ENCODE measurements at regions of chr17 and their contacts with region 1.

Region 1: GRCh38 chr17:49707608-49708514 is at the start of gene SLC35B1:
- DNase-seq: peak; percentile 99
- H3K4me3 Mint-ChIP-seq: peak within 1 kb of the TSS; percentile 83
- H3K27ac Mint-ChIP-seq: peak within 1 kb of the TSS; percentile 100
- H3K4me1 Mint-ChIP-seq: peaks cover 23% of the 10 kb centered on the region
- H3K27me3 Mint-ChIP-seq: no peaks in the 10 kb centered on the region
- CTCF ChIP-seq: peak; percentile 62
- total RNA-seq, gene SLC35B1: 99.6 and 130 TPM in 2 replicates

Region 2: GRCh38 chr17:49567871-49568694 is 139.8 kb before region 1 on chr17:
- CTCF ChIA-PET with region 1: interaction called, 325 read pairs
- POLR2A ChIA-PET with region 1: interaction called, 16 read pairs
- intact Hi-C with region 1: no loop called
- DNase-seq: peak; percentile 79
- H3K4me3 Mint-ChIP-seq: peak overlapping the region; percentile 56
- H3K27ac Mint-ChIP-seq: no peak overlapping the region
- H3K4me1 Mint-ChIP-seq: peaks cover 20% of the 10 kb centered on the region
- H3K27me3 Mint-ChIP-seq: peaks cover 24% of the 10 kb centered on the region
- CTCF ChIP-seq: peak; percentile 95

Region 3: GRCh38 chr17:49646391-49647255 is 61.2 kb before region 1 on chr17:
- CTCF ChIA-PET with region 1: interaction called, 6 read pairs
- POLR2A ChIA-PET with region 1: interaction called, 13 read pairs
- intact Hi-C with region 1: no loop called
- DNase-seq: peak; percentile 76
- H3K4me3 Mint-ChIP-seq: peak overlapping the region; percentile 79
- H3K27ac Mint-ChIP-seq: peak overlapping the region; percentile 84
- H3K4me1 Mint-ChIP-seq: peaks cover 23% of the 10 kb centered on the region
- H3K27me3 Mint-ChIP-seq: no peaks in the 10 kb centered on the region
- CTCF ChIP-seq: no peak

Region 4: DNA sequence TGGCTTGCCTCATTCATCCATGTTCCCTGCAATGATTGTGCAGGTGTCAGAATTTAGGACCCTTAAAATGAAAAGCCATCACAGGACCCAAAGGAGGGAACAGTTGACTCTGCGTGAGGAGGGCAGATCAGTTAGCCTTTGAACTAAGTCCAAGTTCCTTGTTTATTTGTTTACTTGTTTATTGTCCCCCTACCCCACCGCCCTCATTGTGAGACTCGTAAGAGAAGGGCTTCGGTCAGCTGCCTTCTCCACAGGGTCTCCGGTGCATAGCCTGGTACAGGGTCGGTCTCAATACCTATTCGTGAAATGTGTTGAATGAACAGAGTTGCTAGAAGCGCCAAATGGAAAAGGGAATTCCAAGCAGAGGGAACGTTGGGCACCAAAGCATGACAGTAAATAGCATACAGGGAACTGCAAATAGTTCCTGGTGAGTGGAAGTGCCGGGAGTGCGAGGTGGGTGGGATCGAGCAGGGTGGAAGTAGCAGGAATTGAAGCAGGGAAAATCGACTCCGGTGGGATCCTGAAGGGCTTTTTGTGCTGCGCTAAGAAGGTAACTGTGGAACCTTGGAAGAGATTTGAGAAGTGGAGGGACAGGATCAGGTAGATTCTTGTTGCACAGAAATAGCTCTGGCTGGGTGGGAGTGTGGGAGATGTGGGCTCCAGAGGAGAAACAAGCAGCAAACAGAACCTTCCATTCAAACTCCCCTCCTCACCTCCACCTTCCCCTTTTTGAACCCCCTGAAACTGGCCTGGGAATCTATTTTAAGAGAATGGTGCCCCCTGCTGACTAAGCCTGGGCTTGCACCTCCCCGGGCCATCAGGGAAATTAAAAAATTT is 12.8 kb before region 1 on chr17:
- CTCF ChIA-PET with region 1: interaction called, 47 read pairs
- POLR2A ChIA-PET with region 1: interaction called, 12 read pairs
- intact Hi-C with region 1: no loop called
- DNase-seq: peak; percentile 30
- H3K4me3 Mint-ChIP-seq: no peak overlapping the region
- H3K27ac Mint-ChIP-seq: no peak overlapping the region
- H3K4me1 Mint-ChIP-seq: no peaks in the 10 kb centered on the region
- H3K27me3 Mint-ChIP-seq: no peaks in the 10 kb centered on the region
- CTCF ChIP-seq: peak; percentile 92

Region 5: DNA sequence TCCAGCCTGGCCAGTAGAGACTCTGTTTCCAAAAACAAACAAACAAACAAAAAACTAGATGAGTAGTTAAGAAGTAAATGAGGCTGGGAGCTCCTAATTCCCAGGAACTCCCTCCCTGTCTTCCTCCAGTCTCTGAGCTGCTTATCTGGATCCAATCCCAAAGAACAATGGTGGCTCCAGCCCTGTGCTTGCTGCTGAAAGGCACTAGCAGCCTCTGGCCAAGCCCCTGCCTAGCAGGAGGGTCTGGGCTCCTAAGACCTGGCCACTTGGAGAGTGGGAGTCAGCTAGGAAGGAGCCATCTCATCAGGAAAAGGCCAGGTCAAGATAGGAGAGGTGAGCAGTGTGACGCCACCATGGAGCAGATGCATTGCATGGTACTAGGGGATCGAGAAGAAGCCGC is 14.2 kb after region 1 on chr17:
- CTCF ChIA-PET with region 1: interaction called, 8 read pairs
- POLR2A ChIA-PET with region 1: interaction called, 23 read pairs
- intact Hi-C with region 1: no loop called
- DNase-seq: no peak
- H3K4me3 Mint-ChIP-seq: no peak overlapping the region
- H3K27ac Mint-ChIP-seq: no peak overlapping the region
- H3K4me1 Mint-ChIP-seq: no peaks in the 10 kb centered on the region
- H3K27me3 Mint-ChIP-seq: no peaks in the 10 kb centered on the region
- CTCF ChIP-seq: no peak

Region 6: DNA sequence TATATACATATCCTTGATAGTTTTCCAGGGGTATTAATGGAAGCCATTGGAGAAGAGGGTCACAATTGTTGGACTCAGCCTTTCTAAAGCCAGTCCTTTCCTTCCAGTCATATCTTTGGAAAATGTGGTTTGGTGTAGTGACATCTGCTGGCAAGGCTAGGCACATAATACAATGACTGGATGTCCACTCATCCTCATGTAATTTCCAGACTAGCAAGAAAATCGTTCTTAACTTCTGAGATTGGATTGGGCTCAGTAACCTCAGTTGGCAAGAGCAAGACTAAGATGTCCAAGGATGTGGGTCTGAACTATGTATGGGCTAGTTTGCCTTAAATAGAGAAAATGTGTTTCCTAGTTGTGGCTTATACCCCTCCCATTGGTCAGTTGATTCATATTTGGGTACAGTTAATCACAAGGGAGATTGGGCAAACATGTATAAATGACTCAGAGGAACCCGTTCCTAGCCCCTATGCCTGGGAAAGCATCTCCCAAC is 71.9 kb after region 1 on chr17:
- CTCF ChIA-PET with region 1: interaction called, 14 read pairs
- POLR2A ChIA-PET with region 1: interaction called, 6 read pairs
- intact Hi-C with region 1: loop called (anchors 1 kb)
- DNase-seq: peak; percentile 58
- H3K4me3 Mint-ChIP-seq: no peak overlapping the region
- H3K27ac Mint-ChIP-seq: no peak overlapping the region
- H3K4me1 Mint-ChIP-seq: no peaks in the 10 kb centered on the region
- H3K27me3 Mint-ChIP-seq: no peaks in the 10 kb centered on the region
- CTCF ChIP-seq: peak; percentile 56

Region 7: DNA sequence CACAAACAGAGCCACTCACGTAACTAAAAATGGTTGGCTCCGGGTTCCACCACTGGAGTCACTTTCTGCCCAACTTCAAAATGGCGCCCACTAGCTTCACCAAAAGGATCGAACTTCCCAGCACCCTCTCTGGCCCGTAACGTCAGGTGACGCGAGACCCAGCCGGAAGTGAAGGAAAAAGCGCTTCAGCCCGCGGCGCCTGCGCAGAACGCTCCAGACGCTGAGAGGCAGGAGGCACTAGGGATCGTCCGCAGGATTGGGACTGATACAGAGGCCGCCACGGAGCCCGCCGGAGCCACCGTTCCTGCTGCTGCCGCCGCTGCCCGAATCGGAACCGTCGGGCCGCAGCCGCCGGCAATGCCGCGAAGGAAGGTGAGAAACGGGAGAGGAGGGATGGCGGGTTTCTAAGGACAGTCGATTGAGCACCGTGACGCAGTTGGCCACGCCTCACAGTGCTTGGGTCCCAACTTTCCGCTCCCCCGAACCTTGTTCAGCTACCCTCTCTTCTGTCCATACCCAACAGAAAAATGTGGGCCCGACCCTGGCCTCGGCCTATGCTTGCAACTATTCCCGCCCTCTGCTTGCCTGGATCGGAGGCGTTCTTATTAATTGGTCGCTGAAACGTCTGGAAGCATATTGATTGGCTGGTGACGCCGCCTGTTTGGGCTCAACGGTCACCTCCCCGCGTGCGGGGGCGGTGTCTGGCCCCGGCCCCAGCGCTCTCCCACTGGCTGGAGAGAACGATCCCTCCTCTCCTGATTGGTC is 80.8 kb after region 1 on chr17 and contains the start of gene KAT7:
- CTCF ChIA-PET with region 1: interaction called, 6 read pairs
- POLR2A ChIA-PET with region 1: interaction called, 35 read pairs
- intact Hi-C with region 1: no loop called
- DNase-seq: peak; percentile 99
- H3K4me3 Mint-ChIP-seq: peak within 1 kb of the TSS; percentile 93
- H3K27ac Mint-ChIP-seq: peak within 1 kb of the TSS; percentile 98
- H3K4me1 Mint-ChIP-seq: peaks cover 17% of the 10 kb centered on the region
- H3K27me3 Mint-ChIP-seq: no peaks in the 10 kb centered on the region
- CTCF ChIP-seq: no peak
- total RNA-seq, gene KAT7: 45.1 and 53.7 TPM in 2 replicates

Region 8: GRCh38 chr17:49963626-49964302 is 255.9 kb after region 1 on chr17:
- CTCF ChIA-PET with region 1: no interaction called
- POLR2A ChIA-PET with region 1: no interaction called
- intact Hi-C with region 1: no loop called
- DNase-seq: no peak
- H3K4me3 Mint-ChIP-seq: no peak overlapping the region
- H3K27ac Mint-ChIP-seq: no peak overlapping the region
- H3K4me1 Mint-ChIP-seq: peaks cover 6% of the 10 kb centered on the region
- H3K27me3 Mint-ChIP-seq: peaks cover 54% of the 10 kb centered on the region
- CTCF ChIP-seq: no peak